ENCODE measurements at regions of chr12 and their contacts with region 1.

Region 1: DNA sequence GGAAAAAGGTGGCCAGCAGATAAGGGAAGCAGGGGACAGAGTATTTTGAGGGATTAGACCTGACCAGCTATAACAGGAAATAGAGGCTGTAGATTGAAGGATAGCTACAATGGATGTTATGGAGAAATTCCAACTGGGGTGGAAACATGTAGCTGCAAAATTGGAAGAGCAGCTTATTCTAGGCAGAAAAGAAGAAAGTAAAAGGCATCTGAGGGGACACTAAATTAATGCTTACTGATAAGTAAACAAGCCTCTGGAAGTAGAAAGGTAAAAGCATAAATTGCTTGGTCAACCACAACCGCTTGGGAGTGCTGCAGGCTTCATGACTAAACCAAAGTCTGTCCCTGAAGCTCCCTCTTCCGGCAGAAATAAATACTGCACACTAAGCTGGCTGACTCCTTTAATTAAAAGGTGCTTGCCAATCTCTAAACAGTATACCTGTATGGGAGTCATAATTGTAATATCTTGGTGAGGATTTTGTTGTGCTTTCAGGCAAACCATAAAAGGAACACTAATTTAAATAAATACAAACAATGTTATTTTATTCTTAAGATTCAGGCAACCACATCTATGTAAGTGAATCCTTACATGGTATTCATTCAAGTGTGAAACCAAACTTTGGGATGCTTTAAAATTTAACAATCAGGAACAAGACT is 7.7 kb downstream of the UBC start:
- DNase-seq: peak; percentile 95
- H3K4me3 ChIP-seq: no peak overlapping the region
- H3K27ac ChIP-seq: peak overlapping the region; percentile 30 to 65 (median 53)
- H3K4me1 ChIP-seq: peaks cover 24 to 59% (median 42%) of the 10 kb centered on the region in 4 donors
- H3K27me3 ChIP-seq: no peaks in the 10 kb centered on the region
- CTCF ChIP-seq: peak; percentile 95 to 99 (median 97)
- EP300 ChIP-seq: no peak
- POLR2A ChIP-seq: no peak

Region 2: DNA sequence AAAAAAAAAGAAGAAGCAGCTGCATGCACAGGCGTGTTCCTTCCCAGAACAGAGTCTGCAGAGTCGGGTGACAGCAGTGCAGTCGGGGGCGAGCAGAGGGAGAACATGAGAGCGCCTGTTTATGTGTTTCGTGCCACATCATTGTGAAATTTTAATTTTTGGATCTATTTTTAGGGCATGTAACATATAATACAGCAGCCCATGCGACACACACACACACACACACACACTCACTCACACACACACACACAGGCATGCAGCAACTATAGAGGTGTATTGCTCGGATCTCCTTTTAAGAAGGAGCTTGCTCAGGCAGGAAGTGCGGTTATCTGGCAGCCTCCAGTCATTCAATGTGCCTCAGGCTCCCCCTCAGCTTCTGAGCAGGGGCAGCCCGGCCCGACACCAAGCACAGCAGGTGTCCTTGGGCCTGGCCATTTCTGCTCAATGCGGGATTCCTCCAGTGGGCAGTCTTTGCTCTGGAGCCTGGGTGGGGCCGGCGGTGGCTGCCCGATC is 861.9 kb before region 1 on chr12:
- in situ Hi-C with region 1: loop called in 1 of 4 experiments (anchors 10 kb)
- intact Hi-C with region 1: no loop called
- DNase-seq: no peak
- H3K4me3 ChIP-seq: no peak overlapping the region
- H3K27ac ChIP-seq: no peak overlapping the region
- H3K4me1 ChIP-seq: no peaks in the 10 kb centered on the region
- H3K27me3 ChIP-seq: no peaks in the 10 kb centered on the region
- CTCF ChIP-seq: no peak
- EP300 ChIP-seq: no peak
- POLR2A ChIP-seq: no peak

Region 3: DNA sequence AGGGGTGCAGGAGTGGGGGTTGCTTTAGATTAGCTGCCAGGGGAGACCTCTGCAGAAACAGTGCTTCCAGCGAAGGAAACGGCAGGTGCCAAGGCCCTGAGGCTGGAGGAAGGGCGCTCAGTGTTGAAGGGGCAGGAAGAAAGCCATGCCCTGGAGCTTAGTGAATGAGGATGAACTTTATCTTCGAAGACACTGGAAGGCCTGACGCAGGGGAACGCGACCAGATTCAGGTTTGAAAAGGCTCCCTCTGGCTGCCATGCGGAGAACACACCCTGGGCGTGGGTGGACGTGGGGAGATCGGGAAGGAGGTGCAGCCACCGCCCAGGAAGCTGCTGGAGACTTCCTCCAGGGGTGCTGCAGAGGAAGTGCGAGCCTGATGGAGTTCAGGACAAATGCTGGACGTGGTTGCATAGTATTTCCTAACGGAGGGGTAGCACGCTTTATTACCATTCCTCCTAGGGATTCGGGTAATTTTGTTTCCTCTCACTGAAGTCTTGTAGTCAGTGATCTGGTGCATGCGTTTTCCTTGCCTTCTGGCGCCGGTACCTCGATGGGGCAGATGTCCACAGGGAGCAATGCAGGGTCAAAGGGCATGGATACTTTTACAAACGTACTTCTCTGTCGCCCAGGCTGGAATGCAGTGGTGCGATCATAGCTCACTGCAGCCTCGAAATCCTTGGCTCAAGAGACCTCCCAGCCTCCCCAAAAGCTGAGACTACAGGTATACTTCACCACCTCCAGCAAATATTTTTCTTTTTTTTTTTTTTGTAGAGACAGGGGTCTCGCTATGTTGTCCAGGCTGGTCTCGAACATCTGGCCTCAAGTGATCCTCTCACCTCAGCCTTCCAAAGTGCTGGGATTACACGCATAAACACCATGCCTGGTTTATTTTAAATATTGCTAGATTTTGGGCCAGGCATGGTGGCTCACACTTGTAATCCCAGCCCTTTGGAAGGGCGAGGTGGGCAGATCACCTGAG is 34.1 kb after region 1 on chr12:
- in situ Hi-C with region 1: loop called in 1 of 4 experiments (anchors 5 kb)
- intact Hi-C with region 1: no loop called
- DNase-seq: peak; percentile 95
- H3K4me3 ChIP-seq: peak overlapping the region in 3 of 4 donors; percentile 31 to 55 (median 32)
- H3K27ac ChIP-seq: peak overlapping the region; percentile 88 to 92 (median 90)
- H3K4me1 ChIP-seq: peaks cover 9 to 33% (median 21%) of the 10 kb centered on the region in 4 donors
- H3K27me3 ChIP-seq: no peaks in the 10 kb centered on the region
- CTCF ChIP-seq: peak; percentile 87 to 99 (median 93)
- EP300 ChIP-seq: no peak
- POLR2A ChIP-seq: no peak

Measured in transverse colon (tissue), 4 donors.